K562 (cell line): ENCODE measurements at regions of chr1 and their contacts with region 1.

Region 1: DNA sequence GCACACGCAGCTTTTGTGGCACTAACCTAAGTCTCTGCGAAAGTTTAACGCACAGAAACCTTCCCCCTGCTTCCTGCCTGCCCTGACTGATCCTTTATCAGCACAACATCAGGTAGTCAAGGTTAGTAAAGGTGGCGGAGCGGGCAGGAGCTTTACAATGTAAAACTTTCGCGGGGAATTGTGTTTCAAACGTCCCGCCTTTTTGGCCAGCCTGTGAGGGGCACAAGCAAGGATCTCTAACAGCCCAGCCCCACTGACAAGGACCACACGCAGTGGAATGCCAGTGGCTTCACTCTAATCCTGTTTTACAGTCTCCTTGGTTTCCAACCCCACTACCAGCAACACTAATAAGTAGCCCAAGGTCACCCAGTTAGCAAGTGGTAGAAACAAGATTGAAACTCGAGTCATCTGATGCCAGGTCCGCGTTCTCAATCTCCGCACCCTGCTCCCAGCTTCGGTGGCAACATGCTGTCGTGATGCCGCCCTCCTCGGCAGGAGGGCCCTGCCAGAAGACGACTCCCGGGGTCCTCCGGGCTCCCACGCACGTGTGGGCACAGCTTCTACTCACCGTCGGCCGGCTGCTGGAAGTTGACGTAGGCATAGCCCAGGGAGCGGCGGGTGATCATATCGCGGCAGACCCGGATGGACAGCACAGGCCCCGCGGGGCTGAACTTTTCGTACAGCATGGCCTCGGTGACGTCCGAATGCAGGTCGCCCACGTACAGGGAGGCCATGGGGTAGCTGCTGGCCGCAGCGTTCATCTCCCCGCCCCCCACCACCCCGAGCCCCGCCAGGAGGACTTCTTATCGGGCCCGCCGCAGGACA is 1.2 kb downstream of the PABPC4 start:
- DNase-seq: peak; percentile 78 to 85 (median 80)
- ATAC-seq: peak; percentile 80
- H3K4me3 ChIP-seq: peak overlapping the region; percentile 91
- H3K27ac ChIP-seq: peak overlapping the region; percentile 86
- H3K4me1 ChIP-seq: peaks cover 22 to 24% of the 10 kb centered on the region in 2 experiments; a peak in 4 of 5 replicates
- H3K27me3 ChIP-seq: no peaks in the 10 kb centered on the region
- CTCF ChIP-seq: no peak
- EP300 ChIP-seq: no peak
- POLR2A ChIP-seq: no peak; the same call in 1 of the 2 replicates
- RAD21 ChIP-seq: no peak

Region 2: DNA sequence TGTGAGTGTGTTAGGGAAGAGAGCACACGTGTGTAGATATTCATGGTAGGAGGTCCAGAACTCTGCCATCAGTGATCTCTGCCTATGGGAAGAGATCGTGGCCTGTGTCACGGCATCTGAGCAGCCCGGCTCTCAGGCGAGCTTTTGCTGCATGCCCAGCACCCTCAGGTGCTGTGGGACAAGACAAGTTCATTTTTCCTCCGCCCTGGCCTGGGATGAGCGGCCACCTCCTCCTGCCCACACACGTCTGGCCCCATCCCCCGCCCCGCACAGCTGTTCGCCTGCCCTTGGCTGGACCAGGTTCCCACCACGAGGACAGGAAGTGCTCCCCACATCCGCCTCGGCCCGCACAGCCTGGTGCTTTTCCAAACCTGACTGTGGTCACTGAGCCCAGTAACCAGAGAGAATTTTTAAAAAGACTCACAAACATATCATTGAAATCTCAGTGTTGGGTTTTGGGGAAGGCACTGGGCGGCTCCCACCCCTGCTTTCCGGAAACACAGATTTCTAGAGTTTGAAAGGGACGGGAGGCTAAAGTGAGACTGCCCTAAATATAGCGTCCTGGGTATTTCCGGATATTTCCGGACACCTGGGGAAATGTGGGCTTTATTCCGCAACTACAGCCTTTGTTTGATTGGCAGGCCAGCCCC is 65.9 kb before region 1 on chr1:
- CTCF ChIA-PET with region 1: no interaction called
- POLR2A ChIA-PET with region 1: no interaction called
- in situ Hi-C with region 1: no loop called
- intact Hi-C with region 1: no loop called
- DNase-seq: no peak
- ATAC-seq: 0 out of 3 replicates have a peak, but pooled peaks have one; percentile 5
- H3K4me3 ChIP-seq: no peak overlapping the region
- H3K27ac ChIP-seq: no peak overlapping the region
- H3K4me1 ChIP-seq: peaks cover 6 to 8% of the 10 kb centered on the region in 2 experiments; a peak in 2 of 5 replicates
- H3K27me3 ChIP-seq: no peaks in the 10 kb centered on the region
- CTCF ChIP-seq: no peak
- EP300 ChIP-seq: no peak
- POLR2A ChIP-seq: no peak
- RAD21 ChIP-seq: no peak

Region 3: GRCh38 chr1:39590551-39590950 is 15.1 kb after region 1 on chr1:
- CTCF ChIA-PET with region 1: interaction called, 5 read pairs
- POLR2A ChIA-PET with region 1: interaction called, 22 read pairs
- in situ Hi-C with region 1: no loop called
- intact Hi-C with region 1: no loop called
- DNase-seq: peak in 1 of 4 experiments; percentile 11
- ATAC-seq: no peak; the same call in 2 of the 3 replicates
- H3K4me3 ChIP-seq: no peak overlapping the region
- H3K27ac ChIP-seq: no peak overlapping the region
- H3K4me1 ChIP-seq: peaks cover 0 to 4% of the 10 kb centered on the region in 2 experiments; a peak in 3 of 5 replicates
- H3K27me3 ChIP-seq: peaks cover 6 to 21% of the 10 kb centered on the region in 2 experiments; a peak in 4 of 5 replicates
- CTCF ChIP-seq: no peak
- EP300 ChIP-seq: no peak
- POLR2A ChIP-seq: no peak
- RAD21 ChIP-seq: no peak